ENCODE measurements at regions of chr16 and their contacts with region 1.

Region 1: GRCh38 chr16:29757950-29758466 is 12.2 kb upstream of the C16orf54 start:
- DNase-seq: no peak
- ATAC-seq: no peak
- H3K4me3 Mint-ChIP-seq: no peak overlapping the region
- H3K27ac Mint-ChIP-seq: no peak overlapping the region
- H3K4me1 Mint-ChIP-seq: peaks cover 27% of the 10 kb centered on the region
- H3K27me3 Mint-ChIP-seq: no peaks in the 10 kb centered on the region
- CTCF ChIP-seq: no peak

Region 2: GRCh38 chr16:29983420-29984136 is 225.6 kb after region 1 on chr16:
- CTCF ChIA-PET with region 1: no interaction called
- POLR2A ChIA-PET with region 1: interaction called, 12 read pairs
- intact Hi-C with region 1: no loop called
- DNase-seq: no peak
- ATAC-seq: no peak
- H3K4me3 Mint-ChIP-seq: no peak overlapping the region
- H3K27ac Mint-ChIP-seq: no peak overlapping the region
- H3K4me1 Mint-ChIP-seq: no peaks in the 10 kb centered on the region
- H3K27me3 Mint-ChIP-seq: no peaks in the 10 kb centered on the region
- CTCF ChIP-seq: no peak